Pancreas (tissue), 10 donors: ENCODE measurements at regions of chr17 and their contacts with region 1.

Region 1: DNA sequence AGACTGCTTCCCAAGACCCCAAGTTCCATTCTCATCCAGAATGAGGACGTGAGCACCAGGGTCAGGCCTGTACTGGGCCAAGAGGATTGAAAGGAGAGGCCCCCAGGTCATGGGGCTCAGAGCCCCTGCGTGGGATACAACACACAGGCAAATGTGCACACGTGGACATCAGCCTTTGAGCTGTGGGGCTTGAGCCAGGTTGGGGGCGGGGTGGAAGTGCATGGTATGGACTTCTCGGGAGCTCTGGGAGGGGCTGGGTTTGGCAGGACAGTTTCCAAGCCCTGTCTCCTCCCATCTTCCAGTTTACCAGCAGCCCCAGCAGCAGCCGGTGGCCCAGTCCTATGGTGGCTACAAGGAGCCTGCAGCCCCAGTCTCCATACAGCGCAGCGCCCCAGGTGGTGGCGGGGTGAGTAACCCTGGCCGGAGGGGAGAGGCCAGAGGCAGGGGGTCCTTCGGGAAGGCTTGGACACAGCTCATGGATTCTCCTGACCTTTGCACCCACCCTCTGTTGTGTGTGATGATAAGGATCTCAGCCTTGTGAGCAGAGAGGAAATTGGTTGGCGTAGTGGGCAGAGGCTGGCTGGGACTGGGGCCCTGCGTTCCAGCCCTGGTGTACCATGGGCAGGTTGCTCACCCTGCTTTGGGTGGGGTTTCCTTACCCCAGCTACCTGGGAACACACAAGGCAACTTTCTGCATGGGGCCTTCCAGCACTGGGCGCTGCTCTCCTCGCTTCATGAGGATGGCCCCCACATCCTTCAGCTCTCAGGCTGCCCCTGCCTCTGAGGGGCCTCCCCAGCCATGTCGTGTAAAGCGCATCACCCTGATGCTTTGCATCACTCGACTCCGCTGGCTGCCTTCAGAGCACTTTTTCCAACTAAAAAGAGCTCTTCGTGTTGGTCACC is 10.4 kb upstream of the LASP1NB start:
- DNase-seq: peak in 3 of 6 donors; percentile 13 to 54 (median 54)
- ATAC-seq: no peak
- H3K4me3 ChIP-seq: no peak overlapping the region
- H3K27ac ChIP-seq: no peak overlapping the region
- H3K4me1 ChIP-seq: peaks cover 0 to 8% (median 7%) of the 10 kb centered on the region in 3 donors
- H3K27me3 ChIP-seq: no peaks in the 10 kb centered on the region
- CTCF ChIP-seq: no peak

Region 2: DNA sequence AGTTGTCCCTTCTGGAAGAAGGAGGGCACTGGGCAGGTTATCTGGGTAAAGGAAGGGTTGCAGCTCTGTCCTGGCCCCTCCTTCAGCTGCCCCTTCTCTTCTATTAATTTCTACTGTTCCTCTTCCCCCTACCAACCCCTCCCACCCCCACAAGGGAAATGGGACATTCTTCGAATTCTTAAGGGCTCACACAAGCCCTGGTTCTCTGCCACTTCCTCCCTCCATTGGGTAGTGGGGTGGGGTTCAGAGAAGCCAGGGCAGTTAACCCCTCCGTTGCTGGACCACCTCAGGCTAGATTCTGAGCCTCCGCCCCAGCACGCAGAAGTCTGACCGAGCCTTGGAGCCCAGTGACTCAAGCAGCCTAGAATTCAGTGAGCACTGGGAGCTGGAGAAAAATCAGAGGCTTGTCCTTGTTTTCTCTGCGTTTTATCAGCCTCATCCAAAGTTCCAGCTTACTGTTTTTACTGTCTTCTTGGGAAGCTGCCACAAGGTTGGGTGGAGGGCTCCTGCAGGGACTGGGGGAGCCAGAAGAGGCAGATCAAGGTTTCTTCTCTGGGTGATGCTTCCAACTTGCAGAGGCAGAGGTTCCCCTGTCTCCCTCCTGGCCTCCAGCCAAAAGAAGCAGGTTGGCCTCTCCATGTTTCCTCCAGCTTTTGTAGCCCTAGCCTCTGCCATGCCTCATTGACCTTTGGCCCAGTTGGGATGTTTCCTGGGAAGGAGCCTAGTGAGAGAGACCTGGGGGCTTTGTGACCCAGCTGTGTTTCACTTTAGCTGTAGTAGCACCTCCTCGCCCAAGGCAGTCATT is 34.9 kb before region 1 on chr17:
- intact Hi-C with region 1: loop called in 1 of 3 experiments (anchors 5 kb)
- DNase-seq: peak in 3 of 6 donors; percentile 58 to 63 (median 58)
- ATAC-seq: peak; percentile 46 to 73 (median 67)
- H3K4me3 ChIP-seq: no peak overlapping the region
- H3K27ac ChIP-seq: peak overlapping the region; percentile 3 to 67 (median 47)
- H3K4me1 ChIP-seq: peaks cover 29 to 35% (median 33%) of the 10 kb centered on the region in 3 donors
- H3K27me3 ChIP-seq: no peaks in the 10 kb centered on the region
- CTCF ChIP-seq: no peak